ENCODE measurements at regions of chr2 and their contacts with region 1.

Region 1: GRCh38 chr2:173965329-173966025 is at the start of gene SP3:
- DNase-seq: peak; percentile 94
- H3K4me3 Mint-ChIP-seq: peak within 1 kb of the TSS; percentile 93
- H3K27ac Mint-ChIP-seq: peak within 1 kb of the TSS; percentile 99
- H3K4me1 Mint-ChIP-seq: peaks cover 37% of the 10 kb centered on the region
- H3K27me3 Mint-ChIP-seq: no peaks in the 10 kb centered on the region
- total RNA-seq, gene SP3: 95.8 and 103 TPM in 2 replicates

Region 2: DNA sequence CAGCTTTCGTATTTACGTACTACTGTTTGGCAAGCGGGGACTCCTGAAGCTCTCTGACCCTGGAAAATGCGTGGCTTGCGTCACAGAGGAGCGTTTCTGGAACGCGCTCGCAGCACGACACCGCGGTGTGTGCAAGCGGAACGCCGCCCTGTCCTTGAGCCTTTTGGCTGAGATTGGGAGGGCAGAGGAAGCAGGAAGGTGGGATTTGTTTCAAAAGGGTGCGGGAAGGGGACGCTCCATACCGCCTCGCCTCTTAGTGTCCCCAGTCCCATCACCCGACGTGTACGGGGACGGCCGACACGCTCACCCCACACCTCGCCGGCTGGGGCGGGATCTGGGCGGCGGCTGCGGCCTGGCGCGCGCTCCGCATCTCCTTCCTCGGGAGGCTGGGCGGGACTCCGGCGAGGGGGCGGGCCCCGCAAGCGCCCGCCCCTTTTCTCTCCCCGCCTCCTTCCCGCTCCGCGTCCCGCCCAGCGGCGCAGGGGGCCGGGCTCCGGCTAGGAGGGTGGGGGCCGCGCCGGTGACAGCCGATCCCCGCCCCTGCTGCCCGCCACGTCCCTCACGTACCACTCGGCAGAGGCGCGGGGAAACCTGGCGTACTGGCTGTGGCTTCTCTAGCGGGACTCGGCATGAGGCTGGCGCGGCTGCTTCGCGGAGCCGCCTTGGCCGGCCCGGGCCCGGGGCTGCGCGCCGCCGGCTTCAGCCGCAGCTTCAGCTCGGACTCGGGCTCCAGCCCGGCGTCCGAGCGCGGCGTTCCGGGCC is 1409.8 kb before region 1 on chr2 and contains the start of gene PDK1:
- intact Hi-C with region 1: loop called (anchors 5 kb)
- DNase-seq: peak; percentile 91
- H3K4me3 Mint-ChIP-seq: peak within 1 kb of the TSS; percentile 97
- H3K27ac Mint-ChIP-seq: peak within 1 kb of the TSS; percentile 98
- H3K4me1 Mint-ChIP-seq: peaks cover 65% of the 10 kb centered on the region
- H3K27me3 Mint-ChIP-seq: no peaks in the 10 kb centered on the region
- total RNA-seq, gene PDK1: 27.6 and 35.8 TPM in 2 replicates

Region 3: GRCh38 chr2:173929441-173929840 is 36.0 kb before region 1 on chr2:
- intact Hi-C with region 1: loop called (anchors 5 kb)
- DNase-seq: no peak
- H3K4me3 Mint-ChIP-seq: no peak overlapping the region
- H3K27ac Mint-ChIP-seq: no peak overlapping the region
- H3K4me1 Mint-ChIP-seq: peaks cover 17% of the 10 kb centered on the region
- H3K27me3 Mint-ChIP-seq: no peaks in the 10 kb centered on the region

Region 4: DNA sequence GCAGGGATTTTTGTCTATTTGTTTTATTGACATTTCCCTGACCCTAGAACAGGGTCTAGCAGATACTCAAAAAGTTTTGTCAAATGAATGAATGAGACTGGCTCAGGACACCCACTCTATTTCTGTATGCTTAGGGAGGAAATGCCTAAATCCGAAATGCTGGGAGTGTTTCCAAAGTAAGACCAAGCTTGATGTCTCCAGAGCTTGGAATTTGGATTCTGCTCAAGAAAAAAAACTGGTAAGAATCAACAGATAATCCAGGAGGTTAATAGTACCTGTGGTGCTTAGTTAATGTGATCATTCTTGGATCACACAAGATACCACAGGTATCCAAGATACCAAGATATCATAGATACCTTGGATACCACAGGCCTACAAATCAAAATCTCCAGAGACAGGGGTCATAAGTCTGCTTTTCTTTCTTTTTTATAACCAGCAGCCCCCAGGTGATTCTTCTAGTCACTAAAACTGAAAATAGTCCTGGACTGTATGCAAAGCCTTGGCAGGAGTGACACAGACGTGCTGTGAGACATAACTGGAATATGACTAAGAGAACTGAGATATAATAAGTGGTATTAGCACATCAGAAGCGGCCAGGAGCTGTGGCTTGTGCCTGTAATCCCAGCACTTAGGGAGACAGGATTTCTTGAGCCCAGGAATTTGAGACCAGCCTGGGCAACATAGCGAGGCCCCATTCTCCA is 39.6 kb after region 1 on chr2:
- intact Hi-C with region 1: loop called (anchors 5 kb)
- DNase-seq: no peak
- H3K4me3 Mint-ChIP-seq: no peak overlapping the region
- H3K27ac Mint-ChIP-seq: no peak overlapping the region
- H3K4me1 Mint-ChIP-seq: peaks cover 4% of the 10 kb centered on the region
- H3K27me3 Mint-ChIP-seq: peaks cover 1% of the 10 kb centered on the region

Region 5: DNA sequence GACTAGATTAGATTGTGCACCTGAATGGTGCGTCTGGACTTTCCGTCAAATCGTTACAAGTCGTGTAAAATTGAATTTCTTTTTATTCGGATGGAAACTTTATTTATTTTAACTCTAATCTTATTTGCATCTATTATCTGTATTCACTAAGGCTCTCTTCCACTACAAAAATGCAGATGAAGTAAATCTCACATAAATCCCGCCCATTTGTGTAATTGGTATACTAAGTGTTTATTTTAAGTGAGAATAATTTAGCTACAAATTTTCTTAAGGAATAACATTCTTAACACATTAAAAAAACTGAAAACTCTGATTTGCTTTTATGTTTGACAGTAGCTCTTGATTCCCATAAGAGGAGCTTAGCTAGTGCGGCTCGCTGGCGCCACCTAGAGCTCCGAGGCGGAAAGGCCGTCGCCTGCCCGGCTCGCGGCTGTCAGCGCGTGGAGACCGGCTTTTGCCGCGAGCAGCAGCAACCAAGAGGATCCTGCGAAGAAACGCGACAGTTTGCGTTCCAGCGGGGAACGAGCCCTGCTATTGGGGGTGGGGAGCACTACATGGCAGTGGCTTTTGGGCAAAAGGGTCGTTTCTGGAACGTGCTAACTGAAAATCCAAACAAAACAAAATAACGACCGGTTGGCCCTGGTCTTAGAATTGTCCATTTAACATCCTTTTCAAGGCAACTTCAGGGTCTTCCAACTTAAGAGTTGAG is 376.0 kb after region 1 on chr2:
- intact Hi-C with region 1: loop called (anchors 5 kb)
- DNase-seq: peak; percentile 83
- H3K4me3 Mint-ChIP-seq: peak overlapping the region; percentile 70
- H3K27ac Mint-ChIP-seq: peak overlapping the region; percentile 89
- H3K4me1 Mint-ChIP-seq: peaks cover 33% of the 10 kb centered on the region
- H3K27me3 Mint-ChIP-seq: peaks cover 62% of the 10 kb centered on the region

Region 6: GRCh38 chr2:175167792-175168563 is 1202.5 kb after region 1 on chr2 and contains the start of gene ATF2:
- intact Hi-C with region 1: loop called (anchors 1 kb)
- DNase-seq: peak; percentile 98
- H3K4me3 Mint-ChIP-seq: peak within 1 kb of the TSS; percentile 97
- H3K27ac Mint-ChIP-seq: peak within 1 kb of the TSS; percentile 97
- H3K4me1 Mint-ChIP-seq: peaks cover 53% of the 10 kb centered on the region
- H3K27me3 Mint-ChIP-seq: no peaks in the 10 kb centered on the region
- total RNA-seq, gene ATF2: 57.0 and 59.7 TPM in 2 replicates

Measured in activated T-helper 1 cell treated with anti-CD3 and anti-CD28 coated beads, Interleukin-12 subunit alpha, Interleukin-12 subunit beta, Interleukin-2, Interleukin-4 antibody, amounts not matched to agents 30 ng/mL and 10 ng/mL and 1 ng/mL, durations not matched to agents 14 hours and 24 hours and 36 hours (primary cell).